MCF 10A (cell line): ENCODE measurements at regions of chr7 and their contacts with region 1.

Region 1: DNA sequence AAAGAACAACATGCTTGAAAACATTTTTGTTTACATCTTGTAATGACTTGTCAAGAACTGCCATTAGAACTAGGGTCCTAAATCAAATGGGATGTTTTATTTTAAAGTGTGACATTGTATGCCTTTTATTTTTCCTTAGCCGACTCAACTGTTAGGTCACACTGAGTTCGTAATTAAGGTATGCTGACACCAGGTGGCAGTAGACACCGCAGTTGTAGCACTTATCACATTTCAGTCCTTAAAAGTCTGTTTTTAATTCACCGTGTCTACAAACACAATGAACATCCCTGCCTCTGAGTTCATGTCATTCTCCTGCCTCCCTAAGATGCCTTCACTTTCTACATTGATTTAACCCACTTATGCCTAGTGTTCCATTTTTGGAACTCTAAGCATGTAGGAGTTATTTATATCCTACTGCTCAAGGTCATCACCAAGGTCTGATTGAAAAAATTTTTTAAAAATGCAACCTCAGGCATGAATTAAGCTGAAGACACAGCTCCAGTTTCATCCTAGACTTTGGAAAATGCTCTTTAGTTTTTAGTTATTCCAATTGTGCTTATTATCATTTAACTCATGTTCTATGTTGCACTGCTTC is 186.1 kb downstream of the BMPER start:
- DNase-seq: peak; percentile 68
- H3K4me3 Mint-ChIP-seq: no peak overlapping the region
- H3K27ac Mint-ChIP-seq: no peak overlapping the region
- H3K4me1 Mint-ChIP-seq: peaks cover 11% of the 10 kb centered on the region
- H3K27me3 Mint-ChIP-seq: no peaks in the 10 kb centered on the region
- CTCF ChIP-seq: peak; percentile 61

Region 2: DNA sequence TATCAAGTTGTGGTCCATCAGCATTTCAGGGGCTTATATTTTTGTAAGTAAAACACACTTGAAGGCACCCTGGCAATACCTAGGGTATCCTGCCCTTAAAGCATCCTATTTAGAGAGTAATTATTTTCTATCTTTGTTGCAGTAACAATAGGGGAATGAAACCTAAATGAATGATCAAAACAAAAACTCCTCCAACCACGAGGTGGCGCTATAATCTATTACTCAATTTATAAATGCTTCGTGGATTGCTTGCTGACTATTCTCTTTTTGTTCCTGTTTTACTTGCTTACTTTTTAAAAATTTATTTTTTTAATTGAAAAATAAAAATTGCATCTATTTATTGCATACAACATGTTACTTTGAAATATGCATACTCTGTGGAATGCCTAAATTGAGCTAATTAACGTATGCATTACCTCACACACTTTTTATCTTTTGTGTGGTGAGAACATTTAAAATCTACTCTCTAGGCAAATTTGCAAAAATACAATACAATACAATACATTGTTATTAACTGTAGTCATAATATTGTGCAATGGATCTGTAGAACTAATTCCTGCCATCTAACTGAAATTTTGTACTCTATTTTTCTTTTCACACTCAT is 333.8 kb before region 1 on chr7:
- CTCF ChIA-PET with region 1: interaction called, 5 read pairs
- POLR2A ChIA-PET with region 1: no interaction called
- intact Hi-C with region 1: loop called (anchors 5 kb)
- DNase-seq: peak; percentile 61
- H3K4me3 Mint-ChIP-seq: no peak overlapping the region
- H3K27ac Mint-ChIP-seq: no peak overlapping the region
- H3K4me1 Mint-ChIP-seq: no peaks in the 10 kb centered on the region
- H3K27me3 Mint-ChIP-seq: no peaks in the 10 kb centered on the region
- CTCF ChIP-seq: peak; percentile 55

Region 3: DNA sequence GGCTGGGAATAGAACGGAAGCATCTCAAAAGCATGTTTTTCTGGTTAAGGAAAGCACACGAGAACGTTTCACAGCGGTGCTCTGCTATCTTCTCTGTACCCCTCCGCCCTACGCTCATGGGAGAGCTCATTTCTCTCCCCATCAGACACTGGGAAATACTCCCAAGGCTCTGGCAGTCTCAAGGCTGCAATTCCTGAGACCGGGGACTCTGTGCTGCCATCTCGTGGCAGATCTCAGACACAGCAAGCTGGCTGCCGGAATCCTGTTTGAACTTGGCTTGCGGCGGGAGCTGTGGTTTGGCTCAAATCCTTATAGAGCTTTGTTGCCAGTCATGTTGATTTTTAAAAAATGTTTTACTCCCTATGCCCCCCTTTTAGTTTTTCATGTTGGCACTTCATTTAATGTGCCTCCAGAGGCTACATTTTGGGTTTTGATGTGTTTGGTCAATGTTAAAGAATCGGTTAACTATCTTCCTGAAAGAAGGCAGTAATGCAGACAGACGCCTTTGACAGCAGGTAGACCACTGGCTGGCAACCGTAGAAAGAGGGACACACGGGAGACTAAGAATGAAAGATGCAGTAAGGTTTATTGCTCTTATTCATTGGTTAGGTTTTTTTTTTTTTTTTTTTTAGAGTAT is 158.5 kb before region 1 on chr7:
- CTCF ChIA-PET with region 1: no interaction called
- POLR2A ChIA-PET with region 1: no interaction called
- intact Hi-C with region 1: no loop called
- DNase-seq: peak; percentile 84
- H3K4me3 Mint-ChIP-seq: no peak overlapping the region
- H3K27ac Mint-ChIP-seq: peak overlapping the region; percentile 19
- H3K4me1 Mint-ChIP-seq: peaks cover 19% of the 10 kb centered on the region
- H3K27me3 Mint-ChIP-seq: no peaks in the 10 kb centered on the region
- CTCF ChIP-seq: peak; percentile 88

Region 4: DNA sequence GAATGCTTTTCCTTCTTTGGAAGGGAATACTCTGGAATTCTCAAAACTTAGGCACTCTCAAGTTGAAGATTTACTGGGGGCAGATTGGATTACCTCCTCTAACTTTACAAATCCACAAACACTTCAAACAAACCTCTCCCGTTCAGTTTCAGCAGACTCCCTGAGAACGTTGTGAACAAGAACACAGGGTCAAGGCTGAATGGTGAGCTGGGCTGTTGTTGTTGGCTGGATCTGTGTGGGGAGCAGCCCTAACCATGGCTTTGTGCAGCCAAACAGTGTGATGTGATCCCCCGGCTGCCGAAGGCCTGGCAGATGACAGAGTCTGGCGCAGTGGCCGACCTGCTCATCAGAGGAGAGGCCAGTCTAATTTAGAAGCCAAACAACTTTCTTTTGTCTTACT is 92.9 kb before region 1 on chr7:
- CTCF ChIA-PET with region 1: no interaction called
- POLR2A ChIA-PET with region 1: no interaction called
- intact Hi-C with region 1: no loop called
- DNase-seq: no peak
- H3K4me3 Mint-ChIP-seq: no peak overlapping the region
- H3K27ac Mint-ChIP-seq: no peak overlapping the region
- H3K4me1 Mint-ChIP-seq: no peaks in the 10 kb centered on the region
- H3K27me3 Mint-ChIP-seq: no peaks in the 10 kb centered on the region
- CTCF ChIP-seq: no peak

Region 5: GRCh38 chr7:34069630-34070270 is 21.7 kb before region 1 on chr7:
- CTCF ChIA-PET with region 1: interaction called, 11 read pairs
- POLR2A ChIA-PET with region 1: interaction called, 4 read pairs
- intact Hi-C with region 1: no loop called
- DNase-seq: no peak
- H3K4me3 Mint-ChIP-seq: no peak overlapping the region
- H3K27ac Mint-ChIP-seq: no peak overlapping the region
- H3K4me1 Mint-ChIP-seq: peaks cover 15% of the 10 kb centered on the region
- H3K27me3 Mint-ChIP-seq: no peaks in the 10 kb centered on the region
- CTCF ChIP-seq: no peak

Region 6: GRCh38 chr7:34133983-34134782 is 42.8 kb after region 1 on chr7:
- CTCF ChIA-PET with region 1: interaction called, 16 read pairs
- POLR2A ChIA-PET with region 1: no interaction called
- intact Hi-C with region 1: loop called (anchors 1 kb)
- DNase-seq: peak; percentile 77
- H3K4me3 Mint-ChIP-seq: peak overlapping the region; percentile 60
- H3K27ac Mint-ChIP-seq: peak overlapping the region; percentile 99
- H3K4me1 Mint-ChIP-seq: peaks cover 45% of the 10 kb centered on the region
- H3K27me3 Mint-ChIP-seq: no peaks in the 10 kb centered on the region
- CTCF ChIP-seq: peak; percentile 81

Region 7: DNA sequence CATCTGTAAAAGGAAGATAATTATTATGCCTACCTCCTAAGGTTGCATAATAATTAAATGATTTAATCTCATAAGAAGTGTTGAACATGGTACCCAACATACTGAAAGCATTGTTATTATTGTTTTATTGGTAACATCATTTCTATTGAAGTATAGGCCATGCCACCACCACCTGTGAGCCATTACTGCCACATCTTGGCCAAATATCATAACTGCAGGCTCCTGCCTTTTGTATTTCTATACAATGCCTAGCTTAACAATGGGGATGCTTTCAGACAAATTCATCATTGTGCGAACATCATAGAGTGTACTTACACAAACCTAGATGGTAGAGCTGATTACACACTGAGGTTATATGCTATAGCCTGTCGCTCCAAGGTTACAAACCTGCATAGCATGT is 505.5 kb after region 1 on chr7:
- CTCF ChIA-PET with region 1: interaction called, 16 read pairs
- POLR2A ChIA-PET with region 1: no interaction called
- intact Hi-C with region 1: loop called (anchors 1 kb)
- DNase-seq: peak; percentile 49
- H3K4me3 Mint-ChIP-seq: no peak overlapping the region
- H3K27ac Mint-ChIP-seq: no peak overlapping the region
- H3K4me1 Mint-ChIP-seq: no peaks in the 10 kb centered on the region
- H3K27me3 Mint-ChIP-seq: no peaks in the 10 kb centered on the region
- CTCF ChIP-seq: peak; percentile 63

Region 8: DNA sequence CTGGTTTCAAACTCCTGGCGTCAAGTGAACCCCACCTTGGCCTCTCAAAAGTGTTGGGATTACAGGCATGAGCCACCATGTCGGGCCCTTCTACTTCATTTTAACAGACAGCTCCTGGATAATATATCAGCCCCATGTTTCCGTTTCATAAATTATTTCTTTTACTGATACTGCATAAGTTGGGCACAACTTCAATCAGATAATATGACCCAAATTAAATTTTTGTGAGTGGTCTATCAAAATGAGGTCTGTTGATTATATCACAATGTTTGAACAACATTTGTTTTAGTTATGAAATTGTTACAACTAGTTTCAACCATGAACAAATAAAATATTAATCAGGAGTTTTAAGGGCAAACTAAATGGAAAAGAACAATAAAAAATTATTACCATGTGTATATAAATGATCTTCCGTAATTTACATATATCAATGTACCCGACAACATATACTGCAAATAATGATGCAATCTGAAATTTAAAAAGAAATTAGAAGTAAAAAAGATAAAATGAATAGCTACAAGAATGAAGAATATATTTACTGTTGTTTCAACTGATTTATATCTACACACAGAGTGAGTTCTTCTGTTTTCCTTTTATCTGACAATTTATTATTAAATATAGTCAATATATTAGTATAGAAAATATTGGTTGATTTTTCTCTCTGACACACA is 875.2 kb after region 1 on chr7:
- CTCF ChIA-PET with region 1: no interaction called
- POLR2A ChIA-PET with region 1: no interaction called
- intact Hi-C with region 1: no loop called
- DNase-seq: no peak
- H3K4me3 Mint-ChIP-seq: no peak overlapping the region
- H3K27ac Mint-ChIP-seq: no peak overlapping the region
- H3K4me1 Mint-ChIP-seq: no peaks in the 10 kb centered on the region
- H3K27me3 Mint-ChIP-seq: no peaks in the 10 kb centered on the region
- CTCF ChIP-seq: no peak